Prostate gland (tissue), 2 donors: ENCODE measurements at regions of chr4 and their contacts with region 1.

Region 1: DNA sequence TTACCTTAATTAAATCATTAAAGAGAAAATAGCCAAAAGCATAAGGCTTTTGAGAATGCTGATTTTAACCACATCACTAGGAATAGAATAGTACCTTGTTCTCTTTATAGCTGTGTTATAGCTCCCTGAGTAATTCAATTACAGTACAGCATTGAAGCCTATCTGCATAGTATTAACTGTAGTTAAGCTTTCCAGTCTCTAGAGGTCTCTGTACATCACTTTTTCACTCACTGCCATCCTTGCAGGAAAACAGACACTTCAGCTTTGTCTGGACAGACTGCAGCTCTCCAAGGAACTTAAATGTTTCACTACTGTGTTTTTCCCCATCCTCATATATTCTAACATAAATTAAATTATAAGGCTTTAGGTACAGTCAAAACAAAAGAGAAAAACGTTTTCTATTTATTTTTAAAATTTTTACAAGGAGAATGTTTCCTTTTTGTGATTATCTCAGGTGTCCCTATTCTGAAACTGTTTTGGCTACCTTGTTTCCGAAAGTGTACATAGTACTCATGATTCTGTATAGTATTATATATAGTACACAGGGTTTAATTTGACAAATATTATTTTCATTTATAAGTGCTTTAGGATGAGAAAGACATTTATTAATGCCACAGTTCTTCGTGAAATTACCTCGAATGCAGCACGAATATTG is 407.9 kb downstream of the PCDH18 start:
- DNase-seq: no peak
- H3K4me3 ChIP-seq: peak overlapping the region in 1 of 2 donors; percentile 10
- H3K27ac ChIP-seq: no peak overlapping the region
- H3K4me1 ChIP-seq: no peaks in the 10 kb centered on the region
- H3K27me3 ChIP-seq: no peaks in the 10 kb centered on the region
- CTCF ChIP-seq: peak in 3 of 4 experiments; percentile 40 to 54 (median 53)
- POLR2A ChIP-seq: no peak

Region 2: DNA sequence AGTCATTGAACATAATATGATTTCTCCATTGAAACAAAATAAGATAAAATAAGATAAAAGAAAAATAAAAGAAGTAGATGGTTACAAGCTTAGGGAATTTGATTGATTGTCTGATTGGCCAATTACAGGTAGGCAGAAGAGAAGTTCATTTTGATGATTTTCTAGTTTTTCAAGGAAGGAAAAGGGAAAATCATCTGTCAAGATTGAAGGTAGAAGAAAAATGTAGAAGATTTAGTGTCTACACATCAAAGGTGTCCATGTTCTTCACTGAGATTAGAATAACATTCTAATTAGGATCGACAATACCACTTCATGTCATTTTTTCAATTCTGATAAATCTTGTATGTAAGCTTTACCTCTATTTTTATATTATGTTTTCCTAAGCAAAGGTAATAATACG is 81.2 kb before region 1 on chr4:
- intact Hi-C with region 1: no loop called
- DNase-seq: no peak
- H3K4me3 ChIP-seq: no peak overlapping the region
- H3K27ac ChIP-seq: no peak overlapping the region
- H3K4me1 ChIP-seq: no peaks in the 10 kb centered on the region
- H3K27me3 ChIP-seq: no peaks in the 10 kb centered on the region
- CTCF ChIP-seq: no peak
- POLR2A ChIP-seq: no peak

Region 3: DNA sequence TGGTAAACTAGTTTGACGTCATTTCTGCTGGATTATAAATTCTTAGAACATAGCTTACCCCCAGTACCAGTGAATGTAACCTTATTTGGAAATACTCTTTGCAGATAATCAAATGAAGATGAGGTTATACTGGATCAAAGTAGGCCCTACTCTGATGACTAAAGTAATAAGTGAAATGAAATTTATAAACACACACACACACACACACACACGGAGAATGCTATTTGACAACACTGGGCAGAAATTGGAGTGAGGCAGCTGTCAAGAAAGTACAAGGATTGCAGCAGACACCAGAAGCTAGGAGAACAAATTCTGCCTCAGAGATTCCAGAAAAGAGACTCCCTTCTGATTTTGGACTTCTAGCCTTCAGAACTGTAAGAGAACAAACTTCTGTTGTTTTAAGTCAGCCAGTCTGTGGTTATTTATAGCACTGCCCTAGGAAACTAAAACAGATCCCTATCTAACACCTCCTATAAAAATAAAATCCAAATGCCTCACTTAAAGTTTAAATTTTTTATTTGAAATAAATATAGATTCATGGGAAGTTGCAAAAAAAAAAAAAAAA is 40.8 kb before region 1 on chr4:
- intact Hi-C with region 1: no loop called
- DNase-seq: no peak
- H3K4me3 ChIP-seq: no peak overlapping the region
- H3K27ac ChIP-seq: no peak overlapping the region
- H3K4me1 ChIP-seq: no peaks in the 10 kb centered on the region
- H3K27me3 ChIP-seq: no peaks in the 10 kb centered on the region
- CTCF ChIP-seq: no peak
- POLR2A ChIP-seq: no peak

Region 4: GRCh38 chr4:137861682-137862081 is 737.3 kb after region 1 on chr4:
- intact Hi-C with region 1: loop called (anchors 5 kb)
- DNase-seq: no peak
- H3K4me3 ChIP-seq: no peak overlapping the region
- H3K27ac ChIP-seq: no peak overlapping the region
- H3K4me1 ChIP-seq: no peaks in the 10 kb centered on the region
- H3K27me3 ChIP-seq: no peaks in the 10 kb centered on the region
- CTCF ChIP-seq: peak in 3 of 4 experiments; percentile 27 to 38 (median 29)
- POLR2A ChIP-seq: no peak

Region 5: GRCh38 chr4:138174981-138175794 is 1050.8 kb after region 1 on chr4:
- intact Hi-C with region 1: loop called (anchors 10 kb)
- DNase-seq: peak; percentile 38
- H3K4me3 ChIP-seq: no peak overlapping the region
- H3K27ac ChIP-seq: no peak overlapping the region
- H3K4me1 ChIP-seq: no peaks in the 10 kb centered on the region
- H3K27me3 ChIP-seq: no peaks in the 10 kb centered on the region
- CTCF ChIP-seq: no peak
- POLR2A ChIP-seq: no peak